Endothelial cell of umbilical vein (primary cell): ENCODE measurements at regions of chr19 and their contacts with region 1.

Region 1: DNA sequence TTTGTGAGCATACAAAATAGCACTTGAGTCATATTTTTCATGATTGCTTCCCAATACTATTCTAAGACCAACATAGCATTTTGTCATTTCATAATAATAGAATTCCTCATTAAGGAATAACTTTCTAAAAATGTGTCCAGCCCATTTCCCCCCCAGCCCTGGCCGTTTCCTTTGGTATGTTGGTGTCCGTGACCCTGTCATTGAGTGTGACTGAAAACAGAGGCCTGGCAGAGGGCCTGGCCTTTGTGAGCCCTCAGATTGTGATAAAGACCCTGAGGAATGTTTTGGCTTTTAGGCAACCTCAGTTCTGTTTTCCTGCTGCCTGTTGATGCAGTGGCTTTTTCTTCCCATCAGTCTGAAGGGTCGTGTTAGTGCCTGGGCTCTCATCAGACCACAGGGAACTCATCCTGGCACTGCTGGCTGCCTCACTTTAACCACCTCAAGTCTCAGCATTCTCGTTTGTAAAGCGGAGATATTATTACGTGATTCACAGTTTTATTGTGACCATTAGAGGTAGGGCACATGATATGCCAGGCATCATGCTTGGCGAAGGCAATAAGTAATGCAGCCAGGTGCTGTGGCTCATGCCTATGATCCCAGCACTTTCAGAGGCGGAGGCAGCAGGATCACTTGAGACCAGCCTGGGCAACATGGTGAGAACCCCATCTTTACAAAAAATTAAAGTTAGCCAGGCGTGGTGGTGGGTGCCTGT is 13.8 kb downstream of the SPINT2 start:
- DNase-seq: peak; percentile 78
- H3K4me3 ChIP-seq: no peak overlapping the region
- H3K27ac ChIP-seq: peak overlapping the region; percentile 73
- H3K4me1 ChIP-seq: peaks cover 30% of the 10 kb centered on the region
- H3K27me3 ChIP-seq: no peaks in the 10 kb centered on the region
- CTCF ChIP-seq: no peak
- POLR2A ChIP-seq: no peak

Region 2: GRCh38 chr19:38263689-38264485 is 14.2 kb before region 1 on chr19:
- CTCF ChIA-PET with region 1: interaction called, 6 read pairs
- POLR2A ChIA-PET with region 1: no interaction called
- dilution Hi-C with region 1: no loop called
- intact Hi-C with region 1: loop called (anchors 1 kb)
- DNase-seq: no peak
- H3K4me3 ChIP-seq: peak overlapping the region; percentile 14 to 47 (median 34)
- H3K27ac ChIP-seq: no peak overlapping the region
- H3K4me1 ChIP-seq: peaks cover 20% of the 10 kb centered on the region
- H3K27me3 ChIP-seq: no peaks in the 10 kb centered on the region
- CTCF ChIP-seq: no peak
- POLR2A ChIP-seq: no peak

Region 3: GRCh38 chr19:38304866-38305429 is 26.8 kb after region 1 on chr19:
- CTCF ChIA-PET with region 1: no interaction called
- POLR2A ChIA-PET with region 1: no interaction called
- dilution Hi-C with region 1: no loop called
- intact Hi-C with region 1: loop called (anchors 1 kb)
- DNase-seq: peak; percentile 70
- H3K4me3 ChIP-seq: peak overlapping the region in 1 of 3 experiments; percentile 10
- H3K27ac ChIP-seq: no peak overlapping the region
- H3K4me1 ChIP-seq: peaks cover 16% of the 10 kb centered on the region
- H3K27me3 ChIP-seq: no peaks in the 10 kb centered on the region
- CTCF ChIP-seq: no peak
- POLR2A ChIP-seq: peak; percentile 46

Region 4: GRCh38 chr19:38323291-38323690 is 45.2 kb after region 1 on chr19:
- CTCF ChIA-PET with region 1: no interaction called
- POLR2A ChIA-PET with region 1: no interaction called
- dilution Hi-C with region 1: no loop called
- intact Hi-C with region 1: no loop called
- DNase-seq: no peak
- H3K4me3 ChIP-seq: no peak overlapping the region
- H3K27ac ChIP-seq: no peak overlapping the region
- H3K4me1 ChIP-seq: peaks cover 19% of the 10 kb centered on the region
- H3K27me3 ChIP-seq: no peaks in the 10 kb centered on the region
- CTCF ChIP-seq: no peak
- POLR2A ChIP-seq: no peak